ENCODE measurements at regions of chr12 and their contacts with region 1.

Region 1: GRCh38 chr12:122190842-122191668 is 8.1 kb downstream of the LRRC43 start:
- DNase-seq: peak; percentile 87
- ATAC-seq: peak; percentile 98
- H3K4me3 Mint-ChIP-seq: no peak overlapping the region
- H3K27ac Mint-ChIP-seq: no peak overlapping the region
- H3K4me1 Mint-ChIP-seq: no peaks in the 10 kb centered on the region
- H3K27me3 Mint-ChIP-seq: peaks cover 3% of the 10 kb centered on the region
- CTCF ChIP-seq: peak; percentile 78

Region 2: DNA sequence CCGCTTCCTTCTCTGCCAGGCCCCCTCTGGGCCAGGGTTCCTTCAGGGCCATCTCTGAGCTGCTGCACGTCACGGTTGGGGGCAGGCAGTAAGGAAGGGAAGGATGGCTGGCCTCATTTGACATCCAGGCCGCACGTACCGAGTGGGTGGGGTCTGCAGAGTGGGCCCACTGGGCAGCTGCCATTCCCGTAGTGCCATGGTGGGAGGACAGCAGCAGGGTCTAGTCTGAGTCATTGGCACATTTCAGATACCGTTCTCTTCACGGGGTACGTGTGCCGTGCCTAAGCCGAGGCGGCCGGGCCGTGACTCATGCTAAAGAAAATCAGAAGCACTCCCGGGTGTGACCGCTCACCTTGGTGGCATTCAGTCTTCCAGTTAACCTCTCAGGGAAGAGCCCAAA is 60.9 kb before region 1 on chr12:
- CTCF ChIA-PET with region 1: interaction called, 23 read pairs
- POLR2A ChIA-PET with region 1: no interaction called
- intact Hi-C with region 1: loop called (anchors 10 kb)
- DNase-seq: no peak
- ATAC-seq: no peak
- H3K4me3 Mint-ChIP-seq: no peak overlapping the region
- H3K27ac Mint-ChIP-seq: no peak overlapping the region
- H3K4me1 Mint-ChIP-seq: peaks cover 14% of the 10 kb centered on the region
- H3K27me3 Mint-ChIP-seq: no peaks in the 10 kb centered on the region
- CTCF ChIP-seq: no peak

Region 3: DNA sequence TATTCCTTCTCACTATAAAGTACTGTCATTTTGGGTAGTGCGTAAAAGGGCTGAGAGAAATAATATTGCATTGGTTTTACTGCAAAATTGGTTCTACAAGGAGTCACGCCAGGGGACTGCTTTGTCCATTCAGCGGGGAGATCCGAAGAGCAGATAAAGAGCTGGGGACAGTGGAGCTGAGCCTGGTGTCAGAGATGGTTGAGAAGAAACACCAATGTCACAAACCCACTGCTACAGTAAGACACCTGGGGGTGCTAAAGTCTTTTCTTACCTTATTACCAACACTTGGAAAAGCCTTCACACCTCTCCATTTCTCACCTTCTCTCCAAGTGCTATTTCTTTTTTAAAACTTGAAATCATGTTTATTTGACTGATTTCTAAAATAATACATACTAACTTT is 31.2 kb before region 1 on chr12:
- CTCF ChIA-PET with region 1: interaction called, 4 read pairs
- POLR2A ChIA-PET with region 1: no interaction called
- intact Hi-C with region 1: loop called (anchors 5 kb)
- DNase-seq: no peak
- ATAC-seq: peak; percentile 54
- H3K4me3 Mint-ChIP-seq: no peak overlapping the region
- H3K27ac Mint-ChIP-seq: no peak overlapping the region
- H3K4me1 Mint-ChIP-seq: peaks cover 9% of the 10 kb centered on the region
- H3K27me3 Mint-ChIP-seq: no peaks in the 10 kb centered on the region
- CTCF ChIP-seq: peak; percentile 43

Region 4: DNA sequence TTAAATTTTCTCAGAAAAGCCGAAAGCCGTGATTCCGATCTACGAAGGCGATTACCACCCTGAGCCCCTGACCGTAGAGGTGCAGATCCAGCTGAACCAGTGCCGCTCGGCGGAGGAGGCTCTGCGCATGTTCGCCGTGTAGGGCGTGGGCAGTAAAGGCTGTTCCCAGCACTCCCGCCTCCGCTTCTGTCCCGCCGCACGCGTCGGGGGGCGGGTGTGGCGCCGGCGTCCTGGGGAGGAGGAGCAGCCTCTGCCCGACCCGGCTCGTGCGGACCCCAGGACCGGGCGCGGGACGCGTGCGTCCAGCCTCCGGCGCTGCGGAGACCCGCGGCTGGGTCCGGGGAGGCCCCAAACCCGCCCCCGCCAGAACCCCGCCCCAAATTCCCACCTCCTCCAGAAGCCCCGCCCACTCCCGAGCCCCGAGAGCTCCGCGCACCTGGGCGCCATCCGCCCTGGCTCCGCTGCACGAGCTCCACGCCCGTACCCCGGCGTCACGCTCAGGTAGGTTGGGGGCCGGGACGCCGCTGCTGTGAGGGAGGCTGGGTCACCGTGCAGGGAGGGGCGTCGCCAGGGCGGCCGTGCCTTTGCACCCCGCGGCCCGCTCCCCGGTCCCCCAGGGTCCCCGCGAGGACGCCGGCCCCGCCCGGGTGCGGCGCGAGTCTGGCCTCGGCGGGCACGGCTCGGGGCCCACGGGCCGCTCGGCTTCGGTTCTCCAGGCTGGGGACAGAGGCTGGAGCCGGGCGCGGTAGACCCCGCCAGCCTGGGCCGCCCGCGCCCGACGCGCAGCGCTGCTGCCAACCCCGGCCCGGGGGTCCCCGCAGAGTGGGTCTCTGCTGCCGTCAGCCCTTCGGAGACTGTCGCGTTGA is 12.5 kb after region 1 on chr12 and contains the start of gene B3GNT4:
- CTCF ChIA-PET with region 1: interaction called, 11 read pairs
- POLR2A ChIA-PET with region 1: interaction called, 3 read pairs
- intact Hi-C with region 1: no loop called
- DNase-seq: peak; percentile 75
- ATAC-seq: peak; percentile 77
- H3K4me3 Mint-ChIP-seq: peak within 1 kb of the TSS; percentile 75
- H3K27ac Mint-ChIP-seq: peak within 1 kb of the TSS; percentile 25
- H3K4me1 Mint-ChIP-seq: peaks cover 14% of the 10 kb centered on the region
- H3K27me3 Mint-ChIP-seq: peaks cover 18% of the 10 kb centered on the region
- CTCF ChIP-seq: no peak
- total RNA-seq, gene B3GNT4: 3.6 to 5.1 TPM

Region 5: GRCh38 chr12:122225683-122226407 is 34.8 kb after region 1 on chr12 and contains the start of gene DIABLO:
- CTCF ChIA-PET with region 1: interaction called, 21 read pairs
- POLR2A ChIA-PET with region 1: no interaction called
- intact Hi-C with region 1: no loop called
- DNase-seq: peak; percentile 100
- ATAC-seq: peak; percentile 97
- H3K4me3 Mint-ChIP-seq: peak within 1 kb of the TSS; percentile 87
- H3K27ac Mint-ChIP-seq: peak within 1 kb of the TSS; percentile 91
- H3K4me1 Mint-ChIP-seq: peaks cover 37% of the 10 kb centered on the region
- H3K27me3 Mint-ChIP-seq: no peaks in the 10 kb centered on the region
- CTCF ChIP-seq: no peak
- total RNA-seq, gene DIABLO: 50.5 to 55.2 TPM

Region 6: DNA sequence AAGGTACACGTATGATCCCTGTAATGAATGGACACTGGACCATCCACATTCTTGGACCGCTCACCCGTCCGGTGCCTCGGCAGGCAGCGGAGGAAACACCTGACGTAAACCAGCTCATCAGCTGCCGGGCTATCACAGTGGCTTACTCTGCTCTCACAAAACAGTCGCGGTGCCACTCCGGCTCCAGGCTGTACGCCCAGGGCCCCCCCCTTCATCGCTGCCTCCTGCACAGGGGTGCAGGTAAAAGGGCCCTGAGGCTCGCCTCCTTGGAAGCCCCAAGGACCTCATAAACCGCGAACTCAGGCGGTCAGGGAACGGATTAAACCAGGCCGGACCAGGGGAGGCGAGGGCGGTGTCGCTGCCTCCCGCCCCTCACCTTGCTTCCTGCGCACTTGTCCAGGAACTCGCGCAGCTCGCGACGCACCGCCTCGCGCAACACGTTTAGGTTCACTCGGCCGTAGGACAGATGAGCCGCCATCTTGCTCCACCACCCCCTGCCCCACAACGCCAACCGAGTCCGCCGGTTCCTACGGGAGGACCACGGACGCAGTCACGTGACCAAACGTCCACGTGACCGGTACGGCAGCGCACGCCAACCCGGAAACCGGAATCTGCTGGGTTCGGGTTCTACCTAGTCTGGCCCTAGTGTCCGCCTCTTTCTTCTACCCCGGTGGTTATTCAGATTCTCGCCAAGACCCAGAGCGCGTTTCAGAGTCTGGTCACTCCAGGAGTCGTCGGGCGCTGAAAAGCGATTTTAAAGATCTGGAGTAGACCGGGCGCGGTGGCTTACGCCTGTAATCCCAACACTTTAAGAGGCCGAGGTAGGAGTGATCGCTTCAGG is 75.1 kb after region 1 on chr12 and contains the start of gene VPS33A:
- CTCF ChIA-PET with region 1: no interaction called
- POLR2A ChIA-PET with region 1: no interaction called
- intact Hi-C with region 1: no loop called
- DNase-seq: peak; percentile 97
- ATAC-seq: peak; percentile 83
- H3K4me3 Mint-ChIP-seq: peak within 1 kb of the TSS; percentile 97
- H3K27ac Mint-ChIP-seq: peak within 1 kb of the TSS; percentile 99
- H3K4me1 Mint-ChIP-seq: peaks cover 15% of the 10 kb centered on the region
- H3K27me3 Mint-ChIP-seq: peaks cover 2% of the 10 kb centered on the region
- CTCF ChIP-seq: no peak
- total RNA-seq, gene VPS33A: 19.7 to 21.4 TPM

Region 7: GRCh38 chr12:122356192-122356635 is 165.2 kb after region 1 on chr12:
- CTCF ChIA-PET with region 1: no interaction called
- POLR2A ChIA-PET with region 1: no interaction called
- intact Hi-C with region 1: no loop called
- DNase-seq: peak; percentile 73
- ATAC-seq: peak; percentile 91
- H3K4me3 Mint-ChIP-seq: no peak overlapping the region
- H3K27ac Mint-ChIP-seq: peak overlapping the region; percentile 15
- H3K4me1 Mint-ChIP-seq: peaks cover 13% of the 10 kb centered on the region
- H3K27me3 Mint-ChIP-seq: no peaks in the 10 kb centered on the region
- CTCF ChIP-seq: peak; percentile 81